CD14-positive monocyte (primary cell): ENCODE measurements at regions of chr20 and their contacts with region 1.

Region 1: DNA sequence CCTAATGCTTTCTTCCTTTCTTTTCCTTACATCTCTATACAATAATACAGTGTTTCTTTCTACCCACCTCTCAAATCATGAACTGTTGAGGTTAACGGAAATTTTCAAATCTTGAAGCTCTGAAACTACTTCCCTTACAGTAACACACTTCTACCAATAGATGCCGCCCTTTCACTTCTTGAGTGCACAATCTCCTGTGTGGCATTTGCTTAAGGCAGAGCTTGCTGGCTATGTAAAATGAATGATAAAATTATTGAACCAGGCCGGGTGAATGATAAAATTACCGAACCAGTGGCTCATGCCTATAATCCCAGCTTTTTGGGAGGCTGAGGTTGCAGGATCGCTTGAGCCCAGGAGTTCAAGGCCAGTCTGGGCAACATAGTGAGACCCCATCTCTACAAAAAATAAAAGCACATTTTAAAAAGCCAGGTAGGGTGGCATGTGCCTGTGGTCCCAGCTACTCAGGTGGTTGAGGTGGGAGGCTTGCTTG is 56.8 kb downstream of the KCNS1 start:
- DNase-seq: peak; percentile 35 to 51 (median 46)
- H3K4me3 ChIP-seq: no peak overlapping the region
- H3K4me3 Mint-ChIP-seq: no peak overlapping the region
- H3K27ac ChIP-seq: peak overlapping the region in 1 of 2 donors; percentile 49
- H3K27ac Mint-ChIP-seq: peak overlapping the region in 4 of 7 donors; percentile 6 to 74 (median 35)
- H3K4me1 ChIP-seq: peaks cover 30 to 44% of the 10 kb centered on the region in 2 donors
- H3K4me1 Mint-ChIP-seq: peaks cover 37% of the 10 kb centered on the region
- H3K27me3 ChIP-seq: no peaks in the 10 kb centered on the region
- H3K27me3 Mint-ChIP-seq: no peaks in the 10 kb centered on the region
- CTCF ChIP-seq: peak; percentile 84

Region 2: DNA sequence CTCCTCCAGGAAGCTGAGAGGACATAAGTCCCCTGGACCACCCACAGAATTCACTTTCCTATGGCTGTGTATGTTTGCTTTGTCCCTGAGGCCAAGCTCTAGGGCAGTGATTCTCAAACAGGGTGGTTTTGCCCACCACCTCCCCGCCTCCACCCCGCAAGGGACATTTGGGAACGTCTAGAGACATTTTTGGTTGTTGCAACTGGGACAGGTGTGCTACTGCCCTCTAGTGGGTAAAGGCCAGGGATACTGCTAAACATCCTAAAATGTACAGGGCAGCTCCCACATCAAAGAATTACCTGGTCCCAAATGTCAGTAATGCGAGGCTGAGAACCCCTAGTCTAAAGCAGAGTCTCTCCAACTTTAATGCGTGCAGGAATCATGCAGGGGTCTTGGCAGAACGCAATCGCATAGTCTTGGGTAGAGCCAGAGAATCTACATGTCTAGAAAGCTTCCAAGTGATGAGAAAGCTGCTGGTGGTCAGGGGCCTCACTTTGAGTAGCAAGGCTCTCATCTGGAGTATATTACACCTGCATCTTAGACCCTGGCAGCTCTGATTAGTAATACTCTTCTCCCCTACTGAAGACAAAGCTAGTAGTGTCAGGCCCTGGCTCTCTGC is 51.7 kb after region 1 on chr20:
- intact Hi-C with region 1: loop called (anchors 2 to 10 kb)
- DNase-seq: peak; percentile 25 to 40 (median 38)
- H3K4me3 ChIP-seq: no peak overlapping the region
- H3K4me3 Mint-ChIP-seq: no peak overlapping the region
- H3K27ac ChIP-seq: no peak overlapping the region
- H3K27ac Mint-ChIP-seq: no peak overlapping the region
- H3K4me1 ChIP-seq: peaks cover 9 to 17% of the 10 kb centered on the region in 2 donors
- H3K4me1 Mint-ChIP-seq: peaks cover 17% of the 10 kb centered on the region
- H3K27me3 ChIP-seq: peaks cover 40 to 45% of the 10 kb centered on the region in 2 donors
- H3K27me3 Mint-ChIP-seq: peaks cover 37 to 46% (median 40%) of the 10 kb centered on the region in 3 donors
- CTCF ChIP-seq: peak; percentile 89